Activated CD4-positive, alpha-beta T cell treated with anti-CD3 and anti-CD28 coated beads, Interleukin-2, amount 10 ng/mL, durations not matched to agents 24 days and 14 days (primary cell): ENCODE measurements at regions of chr5 and their contacts with region 1.

Region 1: DNA sequence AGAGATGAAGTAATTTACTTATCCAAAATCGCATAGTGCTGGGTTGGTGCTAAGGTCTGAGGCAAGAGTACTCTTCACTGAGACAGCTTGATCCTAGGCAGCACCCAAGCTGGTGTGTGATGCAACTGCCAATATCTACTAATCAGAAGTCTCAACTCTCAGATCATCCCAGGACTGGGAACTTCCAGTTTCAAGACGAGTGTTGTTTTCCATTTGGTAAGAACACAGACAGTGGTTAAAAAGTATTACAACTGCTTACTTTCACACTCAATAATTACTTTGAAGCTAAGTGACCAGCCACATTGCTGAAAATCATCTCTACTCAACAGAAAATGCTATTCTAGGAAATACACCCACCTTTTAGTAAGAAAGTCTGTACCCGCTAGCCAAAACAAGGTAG is 45.3 kb downstream of the FBXW11 start:
- DNase-seq: peak; percentile 67
- H3K4me3 Mint-ChIP-seq: peak overlapping the region; percentile 21
- H3K27ac Mint-ChIP-seq: peak overlapping the region; percentile 70
- H3K4me1 Mint-ChIP-seq: peaks cover 57% of the 10 kb centered on the region
- H3K27me3 Mint-ChIP-seq: no peaks in the 10 kb centered on the region

Region 2: DNA sequence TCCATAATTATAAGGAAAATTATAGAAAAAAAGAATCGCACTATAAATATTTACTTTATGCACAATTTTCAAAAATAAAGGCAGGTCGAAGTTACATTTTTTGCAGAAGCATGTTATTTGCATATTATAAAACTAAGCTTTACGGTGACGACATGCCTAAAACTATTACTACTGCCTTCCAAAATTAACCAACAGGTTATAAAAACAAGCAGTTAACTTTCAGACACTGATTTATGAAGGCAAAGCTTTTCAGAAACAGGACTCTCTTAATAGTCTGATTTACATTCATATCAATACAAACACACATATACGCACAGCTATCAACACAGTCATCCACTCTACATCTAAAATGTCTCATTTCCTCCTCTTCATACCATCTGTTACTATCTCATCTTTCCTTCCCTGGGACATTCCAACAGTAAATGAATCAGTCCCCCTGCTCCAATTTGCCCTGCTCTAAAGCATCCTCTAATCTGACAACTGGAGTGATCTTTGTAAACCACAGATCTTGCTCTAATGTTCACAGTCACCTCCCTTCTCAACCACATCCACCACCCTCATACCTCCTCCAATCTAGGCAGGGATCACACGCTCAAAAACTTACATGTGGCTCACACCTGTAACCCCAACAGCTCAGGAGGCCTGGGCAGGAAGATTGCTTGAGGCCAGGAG is 23.8 kb after region 1 on chr5:
- intact Hi-C with region 1: loop called (anchors 1 kb)
- DNase-seq: peak; percentile 79
- H3K4me3 Mint-ChIP-seq: no peak overlapping the region
- H3K27ac Mint-ChIP-seq: peak overlapping the region; percentile 30
- H3K4me1 Mint-ChIP-seq: peaks cover 34% of the 10 kb centered on the region
- H3K27me3 Mint-ChIP-seq: no peaks in the 10 kb centered on the region

Region 3: GRCh38 chr5:172035039-172035438 is 73.9 kb after region 1 on chr5:
- intact Hi-C with region 1: loop called (anchors 1 kb)
- DNase-seq: no peak
- H3K4me3 Mint-ChIP-seq: peak overlapping the region; percentile 31
- H3K27ac Mint-ChIP-seq: peak overlapping the region; percentile 39
- H3K4me1 Mint-ChIP-seq: peaks cover 12% of the 10 kb centered on the region
- H3K27me3 Mint-ChIP-seq: no peaks in the 10 kb centered on the region

Region 4: GRCh38 chr5:172065501-172065990 is 104.4 kb after region 1 on chr5:
- intact Hi-C with region 1: loop called (anchors 2 kb)
- DNase-seq: no peak
- H3K4me3 Mint-ChIP-seq: no peak overlapping the region
- H3K27ac Mint-ChIP-seq: no peak overlapping the region
- H3K4me1 Mint-ChIP-seq: peaks cover 42% of the 10 kb centered on the region
- H3K27me3 Mint-ChIP-seq: no peaks in the 10 kb centered on the region

Region 5: GRCh38 chr5:172235132-172235780 is 274.1 kb after region 1 on chr5:
- intact Hi-C with region 1: loop called (anchors 10 kb)
- DNase-seq: no peak
- H3K4me3 Mint-ChIP-seq: no peak overlapping the region
- H3K27ac Mint-ChIP-seq: no peak overlapping the region
- H3K4me1 Mint-ChIP-seq: peaks cover 41% of the 10 kb centered on the region
- H3K27me3 Mint-ChIP-seq: no peaks in the 10 kb centered on the region